ENCODE measurements at regions of chr4 and their contacts with region 1.

Region 1: DNA sequence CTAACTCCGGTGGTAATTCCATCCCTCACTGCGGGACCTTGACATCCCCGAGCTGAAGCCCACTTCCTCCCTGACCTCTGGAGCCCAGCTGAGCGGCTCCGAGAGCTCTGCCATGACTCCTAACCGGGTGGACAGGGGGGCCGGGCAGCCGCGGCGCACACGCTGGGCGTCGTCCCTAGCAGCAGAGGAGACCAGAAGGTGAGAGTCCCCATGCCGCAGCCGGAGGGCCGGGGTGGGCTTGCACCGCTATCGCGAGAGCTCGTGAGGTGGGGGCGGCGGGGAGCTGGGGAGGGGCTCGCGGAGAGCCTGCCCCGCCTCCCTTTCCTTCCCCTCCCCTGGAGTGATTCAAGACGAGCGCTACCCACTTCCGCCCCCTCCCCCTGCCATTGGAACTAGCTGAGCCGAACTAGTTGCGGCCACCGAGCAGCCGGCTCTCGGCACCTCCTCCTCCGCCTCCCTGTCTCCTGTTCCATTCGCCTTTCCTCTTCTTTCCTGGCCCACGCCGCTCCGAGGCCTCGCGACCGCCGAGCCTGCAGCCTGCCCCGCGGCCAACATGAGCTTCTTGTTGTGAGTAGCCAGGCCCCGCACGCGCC is at the start of gene MOB1B:
- DNase-seq: peak; percentile 74 to 98 (median 86)

Region 2: GRCh38 chr4:70778888-70779422 is 123.1 kb before region 1 on chr4:
- intact Hi-C with region 1: no loop called
- DNase-seq: no peak

Region 3: DNA sequence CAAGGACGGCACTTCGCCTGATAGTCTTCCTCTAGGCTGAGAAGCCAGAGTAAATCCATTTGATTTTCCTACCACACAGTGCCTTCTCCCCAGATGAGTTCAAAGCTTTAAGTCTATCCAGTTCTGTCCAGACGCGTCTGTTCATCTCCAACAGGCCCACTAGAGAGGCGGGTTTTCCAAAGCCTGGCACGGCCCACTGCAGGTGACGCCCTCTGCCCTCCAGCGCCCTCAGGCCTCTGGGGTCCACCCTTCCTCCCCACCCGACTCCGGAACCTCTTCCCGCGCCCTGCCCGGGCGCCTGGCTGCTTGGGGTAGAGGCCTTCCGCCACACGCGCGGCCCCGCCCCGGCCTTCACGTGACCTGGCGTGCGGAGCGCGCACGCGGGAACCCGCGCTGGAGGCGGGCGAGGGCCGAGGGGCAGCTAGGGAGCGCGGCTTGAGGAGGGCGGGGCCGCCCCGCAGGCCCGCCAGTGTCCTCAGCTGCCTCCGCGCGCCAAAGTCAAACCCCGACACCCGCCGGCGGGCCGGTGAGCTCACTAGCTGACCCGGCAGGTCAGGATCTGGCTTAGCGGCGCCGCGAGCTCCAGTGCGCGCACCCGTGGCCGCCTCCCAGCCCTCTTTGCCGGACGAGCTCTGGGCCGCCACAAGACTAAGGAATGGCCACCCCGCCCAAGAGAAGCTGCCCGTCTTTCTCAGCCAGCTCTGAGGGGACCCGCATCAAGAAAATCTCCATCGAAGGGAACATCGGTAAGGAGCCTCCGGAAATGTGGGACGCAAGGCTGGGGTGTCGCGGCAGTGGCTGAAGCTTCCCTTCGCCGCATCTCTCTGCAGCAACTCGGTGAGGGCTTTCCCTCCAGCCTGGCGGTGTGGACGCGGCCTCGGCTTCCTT is 91.3 kb after region 1 on chr4 and contains the start of gene DCK:
- intact Hi-C with region 1: loop called (anchors 10 kb)
- DNase-seq: peak; percentile 75 to 98 (median 86)

Region 4: DNA sequence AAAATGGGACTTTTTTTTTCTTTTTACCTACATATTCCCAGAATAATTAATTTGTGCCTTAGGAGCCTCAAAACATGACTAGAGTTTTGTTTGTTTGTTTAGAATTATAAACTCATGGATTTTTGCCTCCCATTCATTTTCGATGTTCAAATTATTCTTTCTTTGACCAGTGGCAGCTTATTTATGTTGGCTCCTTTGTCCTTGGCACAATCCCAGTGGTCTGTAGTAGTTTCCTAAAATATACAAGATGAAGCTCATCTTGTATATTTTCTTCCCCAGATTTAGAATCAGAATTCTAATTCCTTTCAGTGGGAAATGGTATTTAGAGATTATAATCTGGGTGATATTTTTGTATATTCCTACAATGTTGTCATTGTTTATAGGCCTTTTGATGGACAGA is 118.5 kb after region 1 on chr4:
- intact Hi-C with region 1: no loop called
- DNase-seq: no peak